Right ventricle myocardium superior (tissue), 1 donor: ENCODE measurements at regions of chr2 and their contacts with region 1.

Region 1: DNA sequence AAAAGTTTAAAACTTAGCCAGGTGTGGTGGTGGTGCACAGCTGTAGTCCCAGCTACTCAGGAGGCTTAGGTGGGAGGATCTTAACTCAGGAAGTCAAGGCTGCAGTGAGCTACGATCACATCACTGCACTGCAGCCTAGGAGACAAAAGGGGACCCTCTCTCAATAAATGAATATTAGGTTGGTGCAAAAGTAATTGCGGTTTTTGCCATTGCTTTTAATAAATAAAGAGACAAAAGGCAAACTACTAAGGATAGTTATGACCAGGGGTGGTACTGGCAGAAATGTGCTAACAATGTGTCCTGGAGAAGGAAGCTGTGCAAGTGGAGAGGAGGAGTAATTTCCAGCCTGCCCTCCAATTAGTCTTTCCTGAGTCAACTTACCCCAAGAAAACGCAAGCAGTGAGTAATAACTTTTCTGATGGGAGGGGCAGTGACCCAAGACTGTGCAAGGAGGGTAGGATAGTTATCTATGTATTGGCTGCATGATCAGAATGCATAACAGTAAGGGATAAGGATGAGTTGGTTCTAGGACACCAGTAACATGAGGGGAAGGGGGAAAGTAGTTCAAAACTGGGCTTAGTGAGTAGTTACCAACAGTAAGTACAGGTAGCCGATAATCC is 1.5 kb downstream of the EXOC6B start:
- DNase-seq: no peak
- ATAC-seq: peak; percentile 1

Region 2: GRCh38 chr2:72669121-72669520 is 155.2 kb before region 1 on chr2:
- intact Hi-C with region 1: no loop called
- DNase-seq: no peak
- ATAC-seq: no peak

Region 3: DNA sequence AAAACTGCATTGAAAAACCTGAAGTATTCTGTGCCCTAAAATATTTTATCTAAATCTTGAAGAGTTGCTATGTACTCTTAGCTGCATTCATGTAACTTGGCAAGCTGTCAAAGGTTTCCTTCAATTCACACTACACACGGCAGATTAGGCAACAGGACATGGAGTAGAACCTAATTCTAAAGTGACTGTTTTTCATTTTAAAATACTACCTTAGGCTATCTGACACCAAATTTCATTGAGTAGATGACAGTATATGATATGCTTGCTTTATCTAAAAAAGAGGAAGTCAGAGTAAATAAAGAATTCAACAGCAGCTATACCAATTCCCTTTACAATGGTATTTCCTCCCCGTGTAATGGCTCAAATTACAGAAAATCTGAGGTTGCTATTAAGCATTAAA is 43.9 kb before region 1 on chr2:
- intact Hi-C with region 1: loop called (anchors 5 kb)
- DNase-seq: no peak
- ATAC-seq: peak; percentile 86